ENCODE measurements at regions of chr2 and their contacts with region 1.

Region 1: DNA sequence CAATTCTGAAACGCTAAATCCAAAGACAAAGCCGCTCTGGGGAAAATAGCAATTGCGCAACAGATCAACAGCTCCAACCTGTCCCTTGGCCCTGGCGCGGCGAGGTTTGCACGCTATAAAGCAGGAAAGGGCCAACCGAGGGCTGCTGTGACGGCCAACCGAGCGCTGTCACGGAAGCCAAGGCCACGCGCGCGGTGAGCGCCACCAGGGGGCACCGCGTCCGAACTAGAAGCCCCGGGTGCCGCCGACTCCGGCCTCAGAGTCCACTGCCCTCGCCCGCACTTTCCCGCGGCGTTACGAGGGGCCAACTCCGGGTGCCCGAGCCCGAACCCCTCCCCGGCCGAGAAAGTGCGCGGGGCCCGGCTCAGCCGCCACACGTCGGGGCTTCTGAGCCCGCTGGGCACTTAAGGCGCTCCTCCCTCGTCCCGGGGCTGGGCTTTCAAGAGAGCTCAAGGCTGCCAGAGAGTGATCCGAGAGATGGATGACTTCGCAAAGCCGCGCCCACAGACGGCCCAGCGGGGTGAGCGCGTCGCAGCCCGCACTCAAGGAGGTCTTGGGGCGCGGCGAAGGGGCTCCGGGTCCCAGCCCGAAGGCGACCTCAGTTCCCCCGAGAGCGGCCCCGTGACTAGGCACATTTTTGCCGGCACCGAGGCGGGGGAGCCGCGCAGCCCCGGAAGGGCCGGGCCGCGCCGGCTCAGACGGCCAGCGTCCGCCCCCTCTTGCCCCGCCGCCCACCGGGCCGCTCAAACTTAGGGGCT is 897 bp downstream of the NFE2L2 start:
- DNase-seq: peak; percentile 97 to 100
- H3K4me3 ChIP-seq: peak overlapping the region; percentile 90
- H3K27ac ChIP-seq: peak overlapping the region; percentile 97
- H3K4me1 ChIP-seq: peaks cover 50% of the 10 kb centered on the region
- H3K27me3 ChIP-seq: no peaks in the 10 kb centered on the region
- CTCF ChIP-seq: peak; percentile 92

Region 2: GRCh38 chr2:177169810-177170514 is 93.7 kb before region 1 on chr2:
- CTCF ChIA-PET with region 1: interaction called, 35 read pairs
- POLR2A ChIA-PET with region 1: interaction called, 4 read pairs
- intact Hi-C with region 1: loop called (anchors 1 kb)
- DNase-seq: peak; percentile 68 to 92
- H3K4me3 ChIP-seq: no peak overlapping the region
- H3K27ac ChIP-seq: no peak overlapping the region
- H3K4me1 ChIP-seq: peaks cover 72% of the 10 kb centered on the region
- H3K27me3 ChIP-seq: no peaks in the 10 kb centered on the region
- CTCF ChIP-seq: no peak

Region 3: DNA sequence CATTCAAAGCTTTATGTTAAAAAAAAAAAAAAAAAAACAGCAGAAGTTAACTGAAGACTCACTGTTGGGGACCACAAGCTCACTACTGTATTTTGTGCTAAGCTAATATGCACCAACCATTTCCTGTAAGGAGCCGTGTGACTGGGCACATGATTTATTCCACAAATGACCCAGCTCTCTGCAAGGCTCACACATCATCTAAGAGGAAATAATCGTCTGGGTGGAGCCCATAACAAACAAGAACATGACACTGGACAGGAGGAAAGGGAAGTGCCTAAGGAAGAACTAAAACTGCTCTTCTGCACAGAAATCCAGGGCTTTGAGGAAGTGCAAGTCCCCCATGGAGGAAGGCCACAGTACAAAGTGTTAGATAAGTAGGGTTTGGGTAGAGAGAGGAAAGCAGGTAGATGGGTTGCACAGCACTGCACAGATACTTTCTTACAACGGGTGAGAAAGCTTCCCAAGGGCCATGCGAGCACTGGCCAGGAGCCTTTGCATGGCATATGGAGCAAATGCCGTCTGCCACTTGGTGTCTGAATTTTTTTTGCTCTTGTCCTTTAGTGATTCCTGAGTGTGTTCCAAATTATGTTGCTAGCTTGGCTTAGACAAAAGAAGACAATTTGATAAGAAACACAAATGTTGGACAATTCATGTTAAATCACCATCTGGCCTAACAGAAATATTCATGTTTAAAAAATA is 23.5 kb before region 1 on chr2:
- CTCF ChIA-PET with region 1: interaction called, 3 read pairs
- POLR2A ChIA-PET with region 1: interaction called, 30 read pairs
- intact Hi-C with region 1: loop called (anchors 1 kb)
- DNase-seq: peak in 1 of 2 experiments; percentile 47
- H3K4me3 ChIP-seq: no peak overlapping the region
- H3K27ac ChIP-seq: peak overlapping the region; percentile 97
- H3K4me1 ChIP-seq: peaks cover 56% of the 10 kb centered on the region
- H3K27me3 ChIP-seq: no peaks in the 10 kb centered on the region
- CTCF ChIP-seq: no peak

Region 4: GRCh38 chr2:177314194-177314593 is 50.6 kb after region 1 on chr2:
- CTCF ChIA-PET with region 1: no interaction called
- POLR2A ChIA-PET with region 1: interaction called, 11 read pairs
- intact Hi-C with region 1: no loop called
- DNase-seq: peak in 1 of 2 experiments; percentile 54
- H3K4me3 ChIP-seq: no peak overlapping the region
- H3K27ac ChIP-seq: no peak overlapping the region
- H3K4me1 ChIP-seq: peaks cover 8% of the 10 kb centered on the region
- H3K27me3 ChIP-seq: no peaks in the 10 kb centered on the region
- CTCF ChIP-seq: no peak

Region 5: DNA sequence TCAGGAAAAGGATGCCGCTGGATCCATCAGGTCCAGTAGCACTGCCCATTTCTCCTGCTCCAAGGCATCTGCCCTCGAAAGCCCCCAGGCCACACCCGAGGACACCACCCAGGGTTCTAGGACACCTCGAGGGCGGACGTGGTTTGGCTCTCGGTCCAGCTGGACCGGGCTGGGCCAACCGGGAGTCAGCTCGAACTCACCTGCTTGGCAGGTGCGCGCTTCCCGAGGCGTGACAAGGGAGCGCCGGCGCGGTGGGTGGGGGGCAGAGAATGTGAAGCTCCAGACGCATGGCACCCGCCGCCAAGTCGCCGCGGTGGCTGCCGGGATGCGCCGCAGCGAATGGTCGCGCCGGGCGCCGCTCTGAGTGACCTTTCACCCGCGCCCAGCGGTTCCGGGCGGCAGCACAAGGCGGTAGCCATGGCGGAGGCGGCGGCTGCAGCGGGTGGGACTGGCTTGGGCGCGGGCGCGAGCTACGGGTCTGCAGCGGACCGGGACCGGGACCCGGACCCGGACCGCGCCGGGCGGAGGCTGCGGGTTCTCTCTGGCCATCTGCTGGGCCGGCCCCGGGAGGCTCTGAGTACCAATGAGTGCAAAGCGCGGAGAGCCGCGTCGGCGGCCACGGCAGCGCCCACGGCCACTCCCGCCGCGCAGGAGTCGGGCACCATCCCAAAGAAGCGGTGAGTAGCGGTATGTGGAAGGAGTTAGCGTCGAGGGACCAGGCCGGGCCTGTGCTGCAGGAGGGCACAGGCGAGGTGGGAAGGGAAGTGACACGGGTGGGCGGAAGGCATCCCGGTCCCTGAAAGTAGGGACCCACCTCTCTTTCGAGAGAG is 129.0 kb after region 1 on chr2 and contains the start of gene AGPS:
- CTCF ChIA-PET with region 1: interaction called, 11 read pairs
- POLR2A ChIA-PET with region 1: interaction called, 3 read pairs
- intact Hi-C with region 1: loop called (anchors 2 kb)
- DNase-seq: peak; percentile 76 to 91
- H3K4me3 ChIP-seq: peak within 1 kb of the TSS; percentile 94
- H3K27ac ChIP-seq: peak within 1 kb of the TSS; percentile 62
- H3K4me1 ChIP-seq: peaks cover 54% of the 10 kb centered on the region
- H3K27me3 ChIP-seq: no peaks in the 10 kb centered on the region
- CTCF ChIP-seq: no peak
- total RNA-seq, gene AGPS: 101 and 107 TPM in 2 replicates

Region 6: GRCh38 chr2:177467646-177468045 is 204.0 kb after region 1 on chr2:
- CTCF ChIA-PET with region 1: no interaction called
- POLR2A ChIA-PET with region 1: no interaction called
- intact Hi-C with region 1: no loop called
- DNase-seq: no peak
- H3K4me3 ChIP-seq: no peak overlapping the region
- H3K27ac ChIP-seq: no peak overlapping the region
- H3K4me1 ChIP-seq: no peaks in the 10 kb centered on the region
- H3K27me3 ChIP-seq: no peaks in the 10 kb centered on the region
- CTCF ChIP-seq: no peak

Region 7: GRCh38 chr2:177724398-177725287 is 461.0 kb after region 1 on chr2:
- CTCF ChIA-PET with region 1: no interaction called
- POLR2A ChIA-PET with region 1: no interaction called
- intact Hi-C with region 1: loop called (anchors 10 kb)
- DNase-seq: peak in 1 of 2 experiments; percentile 61
- H3K4me3 ChIP-seq: no peak overlapping the region
- H3K27ac ChIP-seq: no peak overlapping the region
- H3K4me1 ChIP-seq: no peaks in the 10 kb centered on the region
- H3K27me3 ChIP-seq: no peaks in the 10 kb centered on the region
- CTCF ChIP-seq: peak; percentile 99

Measured in PC-9 (cell line).